Heart left ventricle (tissue), 16 donors: ENCODE measurements at regions of chr22 and their contacts with region 1.

Region 1: GRCh38 chr22:37267135-37267587 is 15.1 kb upstream of the CYTH4 start:
- DNase-seq: peak; percentile 32 to 81 (median 51)
- ATAC-seq: peak; percentile 42 to 73 (median 72)
- H3K4me3 ChIP-seq: peak overlapping the region in 10 of 12 donors; percentile 25 to 61 (median 44)
- H3K27ac ChIP-seq: peak overlapping the region in 4 of 12 donors; percentile 5 to 94 (median 48)
- H3K4me1 ChIP-seq: peaks cover 0 to 55% (median 0%) of the 10 kb centered on the region in 12 donors
- H3K27me3 ChIP-seq: peaks cover 0 to 41% (median 3%) of the 10 kb centered on the region in 9 donors
- CTCF ChIP-seq: peak; percentile 37 to 80 (median 66)
- POLR2A ChIP-seq: no peak

Region 2: GRCh38 chr22:37166675-37167066 is 100.5 kb before region 1 on chr22:
- intact Hi-C with region 1: loop called in 1 of 10 experiments (anchors 10 kb)
- DNase-seq: peak; percentile 83 to 93 (median 89)
- ATAC-seq: peak; percentile 90 to 97 (median 93)
- H3K4me3 ChIP-seq: peak overlapping the region in 4 of 12 donors; percentile 13 to 43 (median 24)
- H3K27ac ChIP-seq: peak overlapping the region in 7 of 12 donors; percentile 2 to 71 (median 25)
- H3K4me1 ChIP-seq: peaks cover 0 to 31% (median 13%) of the 10 kb centered on the region in 12 donors
- H3K27me3 ChIP-seq: peaks cover 0 to 4% (median 0%) of the 10 kb centered on the region in 9 donors
- CTCF ChIP-seq: peak; percentile 86 to 98 (median 92)
- POLR2A ChIP-seq: no peak

Region 3: DNA sequence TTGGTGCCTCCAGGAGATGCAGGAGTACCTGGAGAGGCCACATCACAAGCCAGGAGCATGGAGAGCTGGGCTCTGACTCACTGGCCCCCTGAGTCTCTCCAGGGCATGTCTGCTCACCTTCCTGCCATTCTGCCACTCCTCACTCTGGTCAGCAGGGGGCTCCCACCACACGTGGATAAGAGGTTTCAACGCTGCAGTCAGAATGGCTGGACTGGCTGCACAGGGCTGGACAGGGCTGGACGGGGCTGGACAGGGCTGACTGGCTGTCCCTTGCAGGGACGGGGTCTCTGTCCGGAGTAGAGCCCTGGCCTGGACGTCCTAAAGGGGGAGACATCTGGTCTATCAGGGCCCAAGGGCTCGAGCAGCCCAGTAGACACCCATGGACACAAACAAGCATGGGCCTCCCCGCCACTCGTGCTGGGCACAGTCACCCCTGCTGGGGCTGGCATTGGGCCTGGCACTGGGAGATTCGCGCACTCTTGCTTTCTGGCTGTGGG is 49.8 kb after region 1 on chr22:
- intact Hi-C with region 1: no loop called
- DNase-seq: peak; percentile 72 to 87 (median 76)
- ATAC-seq: peak; percentile 59 to 89 (median 84)
- H3K4me3 ChIP-seq: no peak overlapping the region
- H3K27ac ChIP-seq: no peak overlapping the region
- H3K4me1 ChIP-seq: peaks cover 0 to 34% (median 1%) of the 10 kb centered on the region in 12 donors
- H3K27me3 ChIP-seq: peaks cover 0 to 29% (median 5%) of the 10 kb centered on the region in 9 donors
- CTCF ChIP-seq: peak; percentile 65 to 84 (median 80)
- POLR2A ChIP-seq: no peak

Region 4: DNA sequence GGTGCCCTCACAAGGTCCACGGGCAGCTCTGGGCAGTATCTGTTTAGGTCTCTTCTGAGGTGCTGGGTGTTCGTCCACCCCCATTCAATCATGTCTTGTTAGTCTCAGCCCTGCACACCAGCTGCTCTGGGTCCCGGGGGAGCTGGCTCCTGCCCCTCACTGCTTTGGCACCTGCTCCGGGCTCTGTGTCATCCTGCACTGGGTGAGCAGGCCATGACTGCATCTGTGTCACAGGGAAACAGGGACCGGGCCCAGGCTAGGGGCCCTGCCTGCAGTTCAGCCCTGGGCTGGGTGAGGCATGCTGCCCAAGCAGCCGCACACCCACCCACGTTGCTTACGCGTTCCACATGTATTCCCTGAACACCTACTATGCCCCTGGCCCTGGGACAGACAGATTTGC is 116.2 kb after region 1 on chr22:
- intact Hi-C with region 1: no loop called
- DNase-seq: no peak
- ATAC-seq: no peak
- H3K4me3 ChIP-seq: no peak overlapping the region
- H3K27ac ChIP-seq: no peak overlapping the region
- H3K4me1 ChIP-seq: no peaks in the 10 kb centered on the region
- H3K27me3 ChIP-seq: peaks cover 4 to 67% (median 25%) of the 10 kb centered on the region in 9 donors
- CTCF ChIP-seq: no peak
- POLR2A ChIP-seq: no peak

Region 5: DNA sequence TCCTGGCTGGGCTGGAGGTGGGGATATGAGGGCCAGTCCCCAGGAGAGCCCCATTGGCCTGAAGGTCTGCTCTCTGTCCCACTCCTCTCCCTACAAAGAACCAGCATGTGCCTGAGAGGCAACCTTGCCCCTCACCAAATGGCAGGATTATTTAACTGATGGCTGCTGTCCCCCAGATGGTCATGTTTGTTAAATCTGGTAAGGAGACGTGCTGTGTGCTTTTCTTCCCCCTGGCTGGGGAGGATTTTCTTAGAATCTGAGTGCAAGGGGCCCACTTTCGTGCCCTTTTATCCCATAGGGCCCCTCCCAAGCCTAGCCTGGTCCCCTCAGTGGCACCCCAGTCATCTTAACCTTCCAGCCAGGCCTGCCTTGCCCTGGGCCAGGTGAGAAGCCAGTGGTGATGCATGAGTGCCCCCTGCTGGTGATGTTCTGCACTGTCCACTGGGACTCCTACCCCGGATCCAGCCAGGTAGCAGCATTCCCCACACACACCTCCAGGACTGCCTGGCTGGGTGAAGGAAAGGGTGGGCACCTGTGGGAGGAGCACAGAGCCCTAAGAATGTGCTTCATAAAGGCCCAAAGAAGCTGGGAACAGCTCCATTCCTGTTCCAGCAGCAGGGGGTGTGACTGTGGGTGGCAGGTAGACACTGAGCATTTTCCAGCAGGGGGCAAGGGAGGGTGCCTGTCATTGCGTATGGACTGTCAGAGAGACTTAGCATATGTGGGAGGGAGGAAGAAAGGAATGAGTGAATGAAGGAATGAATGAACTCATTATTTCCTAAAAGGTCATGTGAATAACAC is 190.1 kb after region 1 on chr22:
- intact Hi-C with region 1: loop called in 3 of 10 experiments (anchors 2 to 5 kb)
- DNase-seq: peak; percentile 56 to 79 (median 64)
- ATAC-seq: peak; percentile 51 to 88 (median 82)
- H3K4me3 ChIP-seq: no peak overlapping the region
- H3K27ac ChIP-seq: no peak overlapping the region
- H3K4me1 ChIP-seq: no peaks in the 10 kb centered on the region
- H3K27me3 ChIP-seq: peaks cover 0 to 58% (median 9%) of the 10 kb centered on the region in 9 donors
- CTCF ChIP-seq: peak; percentile 64 to 93 (median 80)
- POLR2A ChIP-seq: no peak